ENCODE measurements at regions of chr17 and their contacts with region 1.

Region 1: DNA sequence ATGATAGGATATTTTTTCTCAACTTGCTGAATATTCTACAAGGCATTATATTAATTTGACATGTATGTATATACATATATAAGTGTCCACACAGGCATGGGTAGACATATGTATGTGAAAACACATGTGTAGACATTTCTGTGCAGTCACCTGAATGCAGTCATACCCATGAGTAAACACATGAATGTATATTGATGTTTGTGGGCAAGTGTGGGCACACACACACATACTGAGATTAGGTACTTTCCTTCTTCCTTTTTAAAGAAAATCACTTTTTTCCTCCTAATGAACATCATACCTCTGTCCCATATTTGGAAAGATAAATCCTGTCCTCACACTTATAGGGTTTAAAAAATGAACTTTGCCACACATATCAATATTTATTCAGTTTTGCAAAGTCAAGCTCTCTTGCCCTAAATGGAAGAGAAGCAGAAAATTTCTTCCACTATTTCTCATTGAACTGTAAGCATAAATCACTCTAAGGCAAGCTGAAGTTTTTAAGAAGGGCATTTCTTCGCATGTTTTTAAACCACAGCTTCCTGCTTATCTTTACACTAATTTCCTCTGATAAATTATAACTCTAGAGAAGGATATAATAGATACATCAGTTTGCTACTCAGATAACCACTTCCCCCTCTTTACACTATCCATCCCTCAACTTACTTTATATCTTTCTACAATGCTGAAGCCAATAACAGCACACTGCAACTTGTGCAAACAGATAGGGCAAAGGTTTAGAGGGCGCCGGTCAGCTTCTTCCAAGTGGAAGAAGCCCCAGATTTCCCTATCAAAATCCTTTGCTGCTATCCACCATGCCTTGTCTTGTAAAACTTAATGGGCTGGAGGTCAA is 49.6 kb upstream of the LRRC37A3 start:
- DNase-seq: no peak
- ATAC-seq: no peak
- H3K4me3 ChIP-seq: no peak overlapping the region
- H3K27ac ChIP-seq: peak overlapping the region in 1 of 10 donors; percentile 76
- H3K4me1 ChIP-seq: peaks cover 0 to 27% (median 10%) of the 10 kb centered on the region in 9 donors
- H3K27me3 ChIP-seq: no peaks in the 10 kb centered on the region
- CTCF ChIP-seq: no peak

Region 2: DNA sequence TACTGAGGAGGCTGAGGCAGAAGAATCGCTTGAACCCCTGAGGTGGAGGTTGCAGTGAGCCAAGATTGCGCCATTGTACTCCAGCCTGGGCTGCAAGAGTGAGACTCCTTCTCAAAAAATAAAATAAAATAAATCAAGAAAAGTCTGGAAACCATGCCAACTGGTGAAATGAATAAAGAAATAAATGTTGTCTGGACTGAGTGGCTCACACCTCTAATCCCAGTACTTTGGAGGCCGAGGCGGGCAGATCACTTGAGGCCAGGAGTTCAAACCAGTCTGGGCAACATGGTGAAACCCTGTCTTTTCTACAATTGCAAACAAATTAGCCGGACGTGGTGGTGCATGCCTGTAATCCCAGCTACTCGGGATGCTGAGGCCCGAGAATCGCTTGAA is 48.9 kb before region 1 on chr17:
- intact Hi-C with region 1: loop called in 2 of 10 experiments (anchors 5 kb)
- DNase-seq: peak in 1 of 2 donors; percentile 29
- ATAC-seq: peak in 7 of 8 donors; percentile 4 to 50 (median 22)
- H3K4me3 ChIP-seq: peak overlapping the region; percentile 39 to 89 (median 68)
- H3K27ac ChIP-seq: peak overlapping the region; percentile 73 to 97 (median 93)
- H3K4me1 ChIP-seq: peaks cover 0 to 23% (median 5%) of the 10 kb centered on the region in 9 donors
- H3K27me3 ChIP-seq: no peaks in the 10 kb centered on the region
- CTCF ChIP-seq: no peak